ENCODE measurements at regions of chr2 and their contacts with region 1.

Region 1: DNA sequence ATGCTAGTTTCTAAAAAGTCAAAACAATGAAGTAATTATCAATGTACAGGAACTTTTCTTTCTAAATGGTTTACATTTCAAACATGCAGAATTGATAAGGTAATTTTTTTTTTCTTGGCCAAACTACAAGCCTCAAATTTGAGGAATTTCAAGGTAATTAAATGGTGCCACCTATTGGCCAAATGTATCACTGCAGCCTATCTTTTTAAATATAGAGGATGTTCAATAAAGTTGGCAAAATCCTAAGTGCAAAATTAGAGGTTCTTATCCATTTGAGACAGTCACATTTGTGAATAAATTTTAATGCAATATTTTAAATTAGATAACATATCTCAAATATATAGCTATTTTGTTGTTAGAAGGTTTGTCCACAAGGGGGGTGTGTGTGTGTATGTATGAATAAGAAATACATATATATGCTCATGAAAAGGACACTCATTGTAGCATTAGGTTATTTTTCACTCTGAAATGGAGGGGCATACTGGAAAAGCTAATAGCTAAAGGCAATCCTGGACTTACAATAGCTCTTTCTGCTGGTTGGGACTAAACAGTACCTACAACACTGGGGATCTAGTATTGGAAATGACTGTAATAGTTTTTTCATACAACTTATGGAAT is 26.2 kb downstream of the MMADHC start:
- DNase-seq: no peak
- H3K4me3 ChIP-seq: no peak overlapping the region
- H3K27ac ChIP-seq: no peak overlapping the region
- H3K4me1 ChIP-seq: no peaks in the 10 kb centered on the region
- H3K27me3 ChIP-seq: no peaks in the 10 kb centered on the region
- CTCF ChIP-seq: peak; percentile 51 to 86 (median 79)

Region 2: DNA sequence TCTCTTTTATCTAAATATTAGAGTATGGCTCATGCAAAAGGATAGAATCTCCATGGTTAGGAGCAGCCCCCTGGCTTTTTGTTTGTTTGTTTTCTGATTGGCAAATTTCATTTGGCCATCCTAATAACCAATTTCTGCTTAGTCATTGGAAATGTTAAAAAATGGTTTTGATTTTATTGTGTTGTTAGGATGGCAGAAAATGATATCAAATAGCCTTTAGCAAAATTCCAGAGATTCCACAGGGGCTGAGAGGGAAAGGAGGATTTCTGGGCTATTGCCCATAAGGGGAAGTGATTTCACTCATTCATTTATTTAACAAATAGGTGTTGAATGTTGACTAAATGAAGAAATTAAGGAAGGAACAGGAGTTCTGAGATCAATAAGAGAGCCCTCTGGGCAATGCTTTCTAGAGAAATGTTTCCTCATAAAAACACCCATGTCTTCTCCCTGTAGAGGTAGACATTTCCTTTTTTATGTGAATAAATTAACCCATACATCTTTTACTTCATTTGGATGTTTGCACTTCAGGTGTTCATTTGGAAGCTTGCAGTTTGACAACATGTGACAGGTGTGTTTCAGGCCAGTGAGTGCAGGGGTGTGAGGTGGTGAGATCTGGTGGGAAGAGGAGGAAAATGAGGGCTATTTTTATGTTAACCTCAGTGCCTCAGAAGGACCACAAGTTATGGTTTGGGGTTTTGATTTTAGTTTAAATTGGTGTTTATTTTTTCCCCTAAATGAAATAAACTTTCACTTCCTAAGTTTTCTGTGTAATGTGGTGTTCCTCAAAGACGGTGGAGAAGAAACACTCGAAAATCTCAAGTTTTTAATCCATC is 978.5 kb before region 1 on chr2:
- intact Hi-C with region 1: loop called (anchors 5 kb)
- DNase-seq: no peak
- H3K4me3 ChIP-seq: no peak overlapping the region
- H3K27ac ChIP-seq: no peak overlapping the region
- H3K4me1 ChIP-seq: no peaks in the 10 kb centered on the region
- H3K27me3 ChIP-seq: no peaks in the 10 kb centered on the region
- CTCF ChIP-seq: no peak

Region 3: GRCh38 chr2:149017116-149017985 is 544.1 kb before region 1 on chr2:
- intact Hi-C with region 1: loop called (anchors 1 kb)
- DNase-seq: peak in 1 of 2 donors; percentile 82
- H3K4me3 ChIP-seq: no peak overlapping the region
- H3K27ac ChIP-seq: no peak overlapping the region
- H3K4me1 ChIP-seq: peaks cover 0 to 5% of the 10 kb centered on the region in 2 donors
- H3K27me3 ChIP-seq: no peaks in the 10 kb centered on the region
- CTCF ChIP-seq: peak; percentile 54 to 88 (median 65)